Heart left ventricle (tissue), 16 donors: ENCODE measurements at regions of chr7 and their contacts with region 1.

Region 1: GRCh38 chr7:47581806-47582763 is at the start of gene TNS3:
- DNase-seq: peak in 4 of 5 donors; percentile 47 to 79 (median 61)
- ATAC-seq: peak in 3 of 4 donors; percentile 36 to 75 (median 65)
- H3K4me3 ChIP-seq: peak within 1 kb of the TSS; percentile 55 to 93 (median 76)
- H3K27ac ChIP-seq: peak within 1 kb of the TSS; percentile 24 to 83 (median 67)
- H3K4me1 ChIP-seq: peaks cover 3 to 73% (median 40%) of the 10 kb centered on the region in 12 donors
- H3K27me3 ChIP-seq: no peaks in the 10 kb centered on the region
- CTCF ChIP-seq: peak in 7 of 12 donors; percentile 11 to 46 (median 29)
- POLR2A ChIP-seq: no peak
- total RNA-seq, gene TNS3: 29.6 to 116 (median 37.2) TPM

Region 2: DNA sequence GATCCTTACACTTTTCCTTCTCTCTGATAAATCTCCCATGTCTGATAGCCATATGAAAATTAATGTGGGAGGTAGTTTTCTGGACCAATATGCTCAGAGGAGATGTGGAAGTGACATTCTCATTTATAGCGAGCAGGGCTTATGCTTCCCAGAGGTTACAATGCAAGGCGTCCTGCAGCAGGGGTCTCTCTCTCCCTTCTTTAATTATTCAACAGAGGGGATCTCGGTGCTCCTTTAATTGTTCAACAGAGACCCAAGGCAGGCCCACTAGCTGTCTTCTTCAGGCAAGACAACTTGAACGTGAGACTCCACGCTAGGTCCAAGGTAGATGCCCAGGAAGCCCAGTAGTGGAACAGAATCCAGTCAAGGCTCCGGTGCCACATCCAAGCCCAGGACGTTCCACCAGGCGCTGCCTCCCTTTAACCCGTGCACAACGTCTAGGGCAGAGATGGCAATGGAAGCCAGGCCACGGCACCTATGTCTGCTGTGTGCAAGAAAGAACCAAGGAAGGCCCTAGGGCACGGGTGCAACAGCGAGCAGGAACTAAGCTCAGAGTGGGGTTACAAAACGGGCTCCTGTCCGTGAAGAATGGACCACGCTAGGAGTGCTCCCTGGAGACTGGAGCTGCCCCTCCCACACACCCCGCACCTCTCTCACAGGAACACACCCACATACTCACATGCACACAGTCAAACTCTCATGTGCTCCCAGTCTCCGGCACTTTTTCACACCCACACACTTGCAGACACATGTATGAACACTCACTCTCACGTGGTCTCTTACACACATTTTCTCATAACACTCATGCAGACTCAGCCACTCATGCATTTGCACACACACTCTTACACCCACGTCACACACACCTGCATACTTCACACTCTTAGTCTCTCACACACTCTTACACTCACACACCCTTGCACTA is 230.6 kb before region 1 on chr7:
- intact Hi-C with region 1: no loop called
- DNase-seq: no peak
- ATAC-seq: no peak
- H3K4me3 ChIP-seq: no peak overlapping the region
- H3K27ac ChIP-seq: no peak overlapping the region
- H3K4me1 ChIP-seq: peaks cover 0 to 21% (median 11%) of the 10 kb centered on the region in 12 donors
- H3K27me3 ChIP-seq: no peaks in the 10 kb centered on the region
- CTCF ChIP-seq: peak in 1 of 12 donors; percentile 8
- POLR2A ChIP-seq: no peak

Region 3: GRCh38 chr7:47435889-47436312 is 146.2 kb before region 1 on chr7:
- intact Hi-C with region 1: loop called in 7 of 10 experiments (anchors 5 to 10 kb)
- DNase-seq: peak in 4 of 5 donors; percentile 68 to 83 (median 72)
- ATAC-seq: peak; percentile 82 to 92 (median 87)
- H3K4me3 ChIP-seq: no peak overlapping the region
- H3K27ac ChIP-seq: no peak overlapping the region
- H3K4me1 ChIP-seq: peaks cover 0 to 5% (median 0%) of the 10 kb centered on the region in 12 donors
- H3K27me3 ChIP-seq: no peaks in the 10 kb centered on the region
- CTCF ChIP-seq: peak; percentile 63 to 87 (median 78)
- POLR2A ChIP-seq: no peak

Region 4: GRCh38 chr7:47444379-47445057 is 137.6 kb before region 1 on chr7:
- intact Hi-C with region 1: loop called in 8 of 10 experiments (anchors 5 to 10 kb)
- DNase-seq: no peak
- ATAC-seq: peak in 1 of 4 donors; percentile 32
- H3K4me3 ChIP-seq: no peak overlapping the region
- H3K27ac ChIP-seq: peak overlapping the region in 1 of 12 donors; percentile 50
- H3K4me1 ChIP-seq: peaks cover 0 to 44% (median 22%) of the 10 kb centered on the region in 12 donors
- H3K27me3 ChIP-seq: no peaks in the 10 kb centered on the region
- CTCF ChIP-seq: peak; percentile 23 to 63 (median 48)
- POLR2A ChIP-seq: no peak

Region 5: GRCh38 chr7:47757921-47758411 is 175.9 kb after region 1 on chr7:
- intact Hi-C with region 1: loop called in 1 of 10 experiments (anchors 5 kb)
- DNase-seq: peak; percentile 35 to 73 (median 59)
- ATAC-seq: peak; percentile 88 to 91 (median 90)
- H3K4me3 ChIP-seq: no peak overlapping the region
- H3K27ac ChIP-seq: peak overlapping the region in 2 of 12 donors; percentile 15 to 53
- H3K4me1 ChIP-seq: peaks cover 0 to 18% (median 0%) of the 10 kb centered on the region in 12 donors
- H3K27me3 ChIP-seq: no peaks in the 10 kb centered on the region
- CTCF ChIP-seq: no peak
- POLR2A ChIP-seq: no peak

Region 6: DNA sequence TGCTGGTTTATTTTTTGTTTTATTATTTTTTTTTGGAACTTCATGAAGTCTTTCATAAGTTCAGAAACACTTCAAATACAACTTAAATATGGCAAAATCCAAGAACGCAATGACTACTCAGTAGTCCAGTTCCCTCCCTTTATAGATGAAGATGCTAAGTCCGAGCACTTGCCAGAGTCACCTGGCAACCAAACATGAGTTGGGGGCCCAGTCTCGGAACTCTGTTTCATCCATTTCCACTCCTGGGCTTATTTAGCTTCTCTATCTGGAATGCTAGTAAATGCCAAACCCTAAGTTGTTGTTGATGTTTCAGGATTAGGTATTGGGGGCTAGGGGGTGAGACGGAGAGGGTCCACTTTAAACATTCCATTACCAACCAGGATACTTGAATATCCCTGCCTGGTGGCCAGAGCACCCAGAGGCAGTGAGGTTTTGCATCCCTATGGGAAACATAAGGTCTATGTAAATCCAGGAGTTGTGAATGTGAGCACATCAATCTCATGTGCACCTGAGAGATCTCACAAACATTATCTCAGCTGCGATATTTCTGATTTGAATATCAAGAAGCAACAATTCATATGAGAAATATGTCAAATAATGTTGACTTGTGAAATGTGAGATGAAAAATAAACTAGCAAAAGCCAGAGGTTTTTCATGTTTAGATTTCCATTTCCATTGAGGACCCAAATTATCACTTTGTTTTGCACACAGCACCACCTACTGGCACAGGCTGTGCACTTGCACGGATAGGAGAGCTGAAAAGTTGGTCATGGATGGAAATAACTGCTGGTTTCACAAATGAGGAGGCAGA is 236.9 kb after region 1 on chr7:
- intact Hi-C with region 1: loop called in 3 of 10 experiments (anchors 10 kb)
- DNase-seq: peak in 4 of 5 donors; percentile 59 to 74 (median 68)
- ATAC-seq: peak in 3 of 4 donors; percentile 61 to 78 (median 63)
- H3K4me3 ChIP-seq: no peak overlapping the region
- H3K27ac ChIP-seq: no peak overlapping the region
- H3K4me1 ChIP-seq: peaks cover 0 to 21% (median 8%) of the 10 kb centered on the region in 12 donors
- H3K27me3 ChIP-seq: no peaks in the 10 kb centered on the region
- CTCF ChIP-seq: peak; percentile 84 to 100 (median 92)
- POLR2A ChIP-seq: no peak